Esophagus muscularis mucosa (tissue), 4 donors: ENCODE measurements at regions of chr1 and their contacts with region 1.

Region 1: GRCh38 chr1:8374812-8375211 is 56.9 kb downstream of the SLC45A1 start:
- DNase-seq: no peak
- H3K4me3 ChIP-seq: no peak overlapping the region
- H3K27ac ChIP-seq: peak overlapping the region; percentile 91 to 95 (median 93)
- H3K4me1 ChIP-seq: peaks cover 92 to 99% (median 98%) of the 10 kb centered on the region in 4 donors
- H3K27me3 ChIP-seq: no peaks in the 10 kb centered on the region
- CTCF ChIP-seq: peak; percentile 37 to 55 (median 51)
- EP300 ChIP-seq: no peak
- POLR2A ChIP-seq: no peak

Region 2: DNA sequence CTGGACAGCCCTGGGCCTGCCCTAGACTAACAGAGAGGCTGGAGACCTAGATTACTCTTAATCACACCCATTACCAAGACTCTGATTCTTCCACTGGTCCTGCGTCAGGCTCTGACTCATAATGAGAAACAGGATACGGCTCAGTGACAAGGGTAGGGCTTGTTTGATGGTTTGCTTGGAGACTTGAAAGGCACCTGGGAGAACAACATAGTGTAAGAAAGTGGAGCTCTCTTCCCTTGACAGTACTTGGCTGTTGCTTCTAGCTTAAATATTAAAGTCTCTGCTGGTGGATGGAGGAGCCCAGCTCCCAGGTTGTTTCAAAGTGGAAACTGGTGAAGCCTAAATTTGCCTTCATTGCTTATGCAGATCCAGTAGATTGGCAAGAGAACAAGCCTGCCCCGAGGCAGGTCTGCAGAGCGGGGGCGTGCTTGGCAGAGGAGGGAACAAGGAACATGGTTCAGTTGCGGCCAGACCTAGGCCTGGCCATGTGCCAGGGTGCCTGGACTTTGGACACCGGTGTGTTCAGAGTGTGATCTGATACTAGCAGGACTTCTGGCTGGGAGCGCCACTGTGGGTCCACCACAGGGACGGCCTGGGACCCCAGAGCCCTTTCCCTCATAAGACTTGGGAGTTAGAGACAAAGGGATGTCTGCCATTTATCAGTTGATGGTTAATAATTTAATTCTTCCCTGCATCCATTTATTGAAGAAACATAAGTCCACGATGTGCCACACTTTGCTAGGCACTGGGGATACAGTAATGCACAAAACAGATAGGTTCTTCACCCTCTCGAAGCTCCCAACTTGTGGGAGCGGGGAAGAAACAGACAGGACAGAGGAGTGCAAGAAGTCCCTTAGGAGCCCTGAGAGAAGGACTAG is 1108.8 kb before region 1 on chr1:
- intact Hi-C with region 1: no loop called
- DNase-seq: peak; percentile 47
- H3K4me3 ChIP-seq: no peak overlapping the region
- H3K27ac ChIP-seq: no peak overlapping the region
- H3K4me1 ChIP-seq: peaks cover 0 to 31% (median 27%) of the 10 kb centered on the region in 4 donors
- H3K27me3 ChIP-seq: no peaks in the 10 kb centered on the region
- CTCF ChIP-seq: no peak
- EP300 ChIP-seq: no peak
- POLR2A ChIP-seq: no peak

Region 3: DNA sequence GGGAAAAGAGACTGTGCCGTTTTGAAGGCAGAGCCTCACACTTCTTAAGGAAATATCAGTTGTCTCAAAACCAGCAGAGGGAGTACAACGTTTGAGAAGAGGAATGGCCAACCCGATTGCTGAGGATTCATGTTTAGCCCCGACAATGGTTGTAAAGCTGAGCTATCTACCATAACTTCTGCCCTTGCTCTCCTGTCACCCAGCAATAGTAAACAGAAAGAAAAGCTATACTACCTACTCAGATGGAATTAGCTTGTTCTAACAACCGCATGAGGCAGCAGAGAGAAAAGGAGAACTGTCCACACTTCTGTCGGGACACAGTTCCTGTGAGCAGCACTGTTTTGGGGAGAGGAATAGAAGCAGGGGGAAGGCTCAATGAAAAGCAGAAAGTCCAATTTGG is 34.3 kb after region 1 on chr1:
- intact Hi-C with region 1: loop called (anchors 5 kb)
- DNase-seq: no peak
- H3K4me3 ChIP-seq: peak overlapping the region; percentile 2 to 14 (median 4)
- H3K27ac ChIP-seq: peak overlapping the region; percentile 99
- H3K4me1 ChIP-seq: peaks cover 95 to 100% (median 99%) of the 10 kb centered on the region in 4 donors
- H3K27me3 ChIP-seq: no peaks in the 10 kb centered on the region
- CTCF ChIP-seq: peak in 2 of 3 experiments; percentile 50 to 54
- EP300 ChIP-seq: no peak
- POLR2A ChIP-seq: no peak

Region 4: GRCh38 chr1:8423650-8424538 is 49.1 kb after region 1 on chr1:
- intact Hi-C with region 1: loop called (anchors 5 kb)
- DNase-seq: no peak
- H3K4me3 ChIP-seq: peak overlapping the region; percentile 82 to 93 (median 88)
- H3K27ac ChIP-seq: peak overlapping the region; percentile 99
- H3K4me1 ChIP-seq: peaks cover 39 to 68% (median 45%) of the 10 kb centered on the region in 4 donors
- H3K27me3 ChIP-seq: no peaks in the 10 kb centered on the region
- CTCF ChIP-seq: peak in 1 of 3 experiments; percentile 28
- EP300 ChIP-seq: no peak
- POLR2A ChIP-seq: no peak